Activated CD4-positive, alpha-beta T cell treated with anti-CD3 and anti-CD28 coated beads, Interleukin-2, amount 10 ng/mL, durations not matched to agents 7 days and 5 days (primary cell): ENCODE measurements at regions of chr17 and their contacts with region 1.

Region 1: GRCh38 chr17:64477849-64478248 is 19.0 kb downstream of the POLG2 start:
- DNase-seq: no peak
- H3K4me3 Mint-ChIP-seq: no peak overlapping the region
- H3K27ac Mint-ChIP-seq: no peak overlapping the region
- H3K4me1 Mint-ChIP-seq: no peaks in the 10 kb centered on the region
- H3K27me3 Mint-ChIP-seq: no peaks in the 10 kb centered on the region

Region 2: GRCh38 chr17:64262417-64263260 is 215.2 kb before region 1 on chr17 and contains the start of gene TEX2:
- CTCF ChIA-PET with region 1: no interaction called
- POLR2A ChIA-PET with region 1: no interaction called
- DNase-seq: peak; percentile 76
- H3K4me3 Mint-ChIP-seq: peak within 1 kb of the TSS; percentile 95
- H3K27ac Mint-ChIP-seq: peak within 1 kb of the TSS; percentile 95
- H3K4me1 Mint-ChIP-seq: peaks cover 40% of the 10 kb centered on the region
- H3K27me3 Mint-ChIP-seq: peaks cover 9% of the 10 kb centered on the region
- total RNA-seq, gene TEX2: 14.3 to 16.8 TPM

Region 3: DNA sequence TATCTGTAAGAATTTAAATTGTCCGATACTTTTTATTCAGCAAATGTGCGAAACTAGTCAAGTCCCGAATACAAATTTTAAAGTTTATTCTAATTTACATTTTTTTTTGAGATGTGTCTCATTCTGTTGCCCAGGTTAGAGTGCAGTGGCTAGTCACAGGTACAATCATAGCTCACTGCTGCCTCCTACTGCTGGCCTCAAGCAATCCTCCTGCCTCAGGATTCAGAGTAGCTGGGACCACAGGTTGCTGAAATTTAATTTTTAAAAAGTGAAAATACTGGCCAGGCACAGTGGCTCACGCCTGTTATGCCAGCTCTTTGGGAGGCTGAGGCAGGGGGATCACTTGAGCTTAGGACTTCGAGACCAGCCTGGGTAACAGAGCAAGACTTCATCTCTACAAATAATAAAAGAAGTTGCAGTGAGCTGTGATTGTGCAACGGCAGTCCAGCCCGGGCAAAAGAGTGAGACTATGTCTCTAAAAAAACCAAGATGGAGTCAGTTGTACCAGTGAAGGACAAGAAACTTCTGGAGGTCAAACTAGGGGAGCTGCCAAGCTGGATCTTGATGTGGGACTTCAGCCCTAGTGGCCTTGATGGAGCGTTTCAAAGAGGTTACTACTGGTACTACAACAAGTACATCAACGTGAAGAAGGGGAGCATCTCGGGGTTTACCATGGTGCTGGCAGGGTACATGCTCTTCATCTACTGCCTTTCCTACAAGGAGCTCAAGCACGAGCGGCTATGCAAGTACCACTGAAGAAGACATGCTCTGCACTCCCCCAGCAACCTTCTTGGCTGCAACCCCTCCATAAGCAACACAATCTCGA is 13.4 kb after region 1 on chr17:
- CTCF ChIA-PET with region 1: interaction called, 16 read pairs
- POLR2A ChIA-PET with region 1: no interaction called
- DNase-seq: peak; percentile 75
- H3K4me3 Mint-ChIP-seq: no peak overlapping the region
- H3K27ac Mint-ChIP-seq: no peak overlapping the region
- H3K4me1 Mint-ChIP-seq: peaks cover 37% of the 10 kb centered on the region
- H3K27me3 Mint-ChIP-seq: no peaks in the 10 kb centered on the region

Region 4: DNA sequence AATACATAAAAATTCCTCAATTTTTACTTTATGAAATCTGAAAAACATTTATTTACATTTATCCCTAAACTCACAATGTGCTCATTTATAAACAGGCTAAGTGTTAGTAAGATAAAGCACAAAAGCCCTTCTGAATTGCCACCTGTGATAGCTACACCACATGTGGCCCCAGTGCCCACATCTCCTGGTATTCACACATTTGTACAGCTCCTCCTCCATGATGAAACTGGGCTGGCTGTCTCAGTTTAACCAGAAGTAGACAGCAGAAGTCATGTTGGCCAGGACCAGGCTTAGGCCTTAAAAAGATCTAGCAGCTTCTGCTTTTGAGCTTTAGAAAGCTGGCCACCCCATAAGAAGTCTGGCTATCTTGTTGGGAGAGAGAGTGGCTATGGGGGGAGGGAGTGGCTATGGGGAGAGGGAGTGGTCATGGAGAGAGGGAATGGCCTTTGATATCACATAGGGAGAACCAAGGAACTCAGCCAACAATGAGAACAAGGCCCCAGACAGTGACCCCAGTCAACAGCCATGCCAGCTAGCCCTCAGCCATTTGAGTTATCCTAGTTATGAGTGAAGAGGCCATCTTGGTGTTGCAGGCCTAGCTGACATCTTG is 76.3 kb after region 1 on chr17:
- CTCF ChIA-PET with region 1: no interaction called
- POLR2A ChIA-PET with region 1: no interaction called
- DNase-seq: no peak
- H3K4me3 Mint-ChIP-seq: no peak overlapping the region
- H3K27ac Mint-ChIP-seq: no peak overlapping the region
- H3K4me1 Mint-ChIP-seq: no peaks in the 10 kb centered on the region
- H3K27me3 Mint-ChIP-seq: no peaks in the 10 kb centered on the region

Region 5: GRCh38 chr17:64580384-64581315 is 102.8 kb after region 1 on chr17:
- CTCF ChIA-PET with region 1: no interaction called
- POLR2A ChIA-PET with region 1: no interaction called
- DNase-seq: no peak
- H3K4me3 Mint-ChIP-seq: no peak overlapping the region
- H3K27ac Mint-ChIP-seq: no peak overlapping the region
- H3K4me1 Mint-ChIP-seq: peaks cover 11% of the 10 kb centered on the region
- H3K27me3 Mint-ChIP-seq: no peaks in the 10 kb centered on the region

Region 6: DNA sequence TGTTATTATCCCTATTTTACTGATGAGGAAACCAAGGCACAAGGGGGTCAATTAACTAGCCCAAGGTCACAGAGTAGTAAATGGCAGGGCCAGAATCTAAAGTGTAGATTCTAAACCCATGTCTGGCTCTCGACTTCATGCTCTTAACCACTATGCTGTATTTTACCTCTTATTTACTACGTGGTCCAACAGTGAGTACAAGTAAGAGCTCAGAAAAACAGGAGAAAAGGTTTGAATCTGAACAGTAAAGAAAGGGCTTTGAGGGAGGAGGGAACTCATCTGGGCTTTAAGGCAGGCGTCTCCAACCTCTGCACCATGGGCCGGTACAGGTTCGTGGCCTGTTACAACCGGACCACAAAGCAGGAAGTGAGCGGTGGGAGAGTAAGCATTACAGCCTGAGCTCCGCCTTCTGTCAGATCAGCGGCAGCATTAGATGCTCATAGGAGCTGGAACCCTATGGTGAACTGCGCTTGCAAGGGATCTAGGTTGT is 121.4 kb after region 1 on chr17:
- CTCF ChIA-PET with region 1: no interaction called
- POLR2A ChIA-PET with region 1: no interaction called
- DNase-seq: peak; percentile 80
- H3K4me3 Mint-ChIP-seq: peak overlapping the region; percentile 57
- H3K27ac Mint-ChIP-seq: peak overlapping the region; percentile 82
- H3K4me1 Mint-ChIP-seq: peaks cover 38% of the 10 kb centered on the region
- H3K27me3 Mint-ChIP-seq: no peaks in the 10 kb centered on the region